AG04449 (cell line): ENCODE measurements at regions of chr16 and their contacts with region 1.

Region 1: DNA sequence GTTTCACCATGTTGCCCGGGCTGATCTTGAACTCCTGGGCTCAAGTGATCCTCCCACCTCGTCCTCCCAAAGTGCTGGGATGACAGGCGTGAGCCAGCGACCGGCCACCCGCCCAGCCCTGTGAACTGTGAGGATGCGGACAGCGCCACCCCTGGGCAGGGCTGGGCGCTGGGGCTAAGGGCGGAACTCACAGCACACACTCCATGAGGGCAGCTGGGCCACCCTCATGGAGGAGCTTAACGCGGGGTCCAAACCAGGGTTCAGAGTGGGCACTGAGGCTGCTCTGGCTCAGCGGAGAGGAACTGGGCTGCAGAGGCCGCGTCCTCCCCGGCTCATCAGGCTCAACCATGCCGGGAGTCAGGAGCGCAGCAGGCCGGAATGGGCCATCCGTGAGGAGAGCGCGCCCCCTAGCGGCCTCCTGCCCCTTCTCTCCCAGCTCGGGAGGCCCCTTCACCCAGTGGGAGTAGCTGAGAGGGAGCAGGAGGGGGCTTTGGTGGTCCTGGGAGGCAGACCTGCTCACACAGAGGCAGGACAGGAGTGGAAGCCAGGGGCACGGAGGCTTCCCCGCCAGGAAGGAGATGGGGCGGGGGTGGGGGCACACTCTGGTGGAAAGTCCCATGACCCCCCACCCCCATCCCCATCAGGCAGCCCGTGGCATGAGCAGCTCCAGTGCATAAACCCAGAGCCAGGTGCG is 13.8 kb downstream of the CORO7 start:
- DNase-seq: no peak
- H3K4me3 ChIP-seq: peak overlapping the region; percentile 15
- CTCF ChIP-seq: peak; percentile 90

Region 2: DNA sequence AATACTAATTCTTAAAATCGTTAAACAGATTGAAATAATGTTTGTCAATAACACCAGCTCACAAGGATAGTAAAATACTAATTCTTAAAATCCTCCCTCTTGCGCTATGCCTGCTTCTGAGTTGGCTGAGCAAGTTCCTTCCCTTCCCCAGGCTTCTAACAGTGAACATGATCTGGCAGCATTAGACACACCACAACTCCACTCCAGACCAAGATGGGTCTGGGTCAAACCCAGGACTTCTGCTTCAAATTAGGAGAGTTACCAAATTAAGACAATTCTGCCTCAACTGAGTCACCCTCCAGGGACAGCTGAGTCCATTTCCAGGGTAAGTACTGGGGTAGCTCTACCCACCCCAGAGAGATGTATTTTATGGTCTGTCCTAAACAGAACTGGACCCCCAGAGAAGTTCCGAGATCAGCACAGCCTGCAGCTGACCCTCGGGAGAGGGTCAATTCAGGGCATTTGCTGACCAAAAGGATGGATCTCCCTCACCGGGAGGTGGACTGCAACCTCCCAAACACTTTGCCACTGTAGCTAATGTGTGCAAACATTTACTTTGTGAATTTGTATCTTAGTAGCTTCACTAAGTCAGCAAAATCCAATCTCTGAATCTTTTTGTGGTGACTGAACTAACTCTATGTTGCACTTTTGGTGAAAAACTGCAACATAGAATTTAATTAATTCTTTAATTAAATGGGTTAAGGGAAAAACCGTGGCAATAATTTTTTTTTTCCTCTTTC is 335.2 kb before region 1 on chr16:
- CTCF ChIA-PET with region 1: no interaction called
- POLR2A ChIA-PET with region 1: no interaction called
- DNase-seq: no peak
- H3K4me3 ChIP-seq: no peak overlapping the region
- CTCF ChIP-seq: no peak

Region 3: DNA sequence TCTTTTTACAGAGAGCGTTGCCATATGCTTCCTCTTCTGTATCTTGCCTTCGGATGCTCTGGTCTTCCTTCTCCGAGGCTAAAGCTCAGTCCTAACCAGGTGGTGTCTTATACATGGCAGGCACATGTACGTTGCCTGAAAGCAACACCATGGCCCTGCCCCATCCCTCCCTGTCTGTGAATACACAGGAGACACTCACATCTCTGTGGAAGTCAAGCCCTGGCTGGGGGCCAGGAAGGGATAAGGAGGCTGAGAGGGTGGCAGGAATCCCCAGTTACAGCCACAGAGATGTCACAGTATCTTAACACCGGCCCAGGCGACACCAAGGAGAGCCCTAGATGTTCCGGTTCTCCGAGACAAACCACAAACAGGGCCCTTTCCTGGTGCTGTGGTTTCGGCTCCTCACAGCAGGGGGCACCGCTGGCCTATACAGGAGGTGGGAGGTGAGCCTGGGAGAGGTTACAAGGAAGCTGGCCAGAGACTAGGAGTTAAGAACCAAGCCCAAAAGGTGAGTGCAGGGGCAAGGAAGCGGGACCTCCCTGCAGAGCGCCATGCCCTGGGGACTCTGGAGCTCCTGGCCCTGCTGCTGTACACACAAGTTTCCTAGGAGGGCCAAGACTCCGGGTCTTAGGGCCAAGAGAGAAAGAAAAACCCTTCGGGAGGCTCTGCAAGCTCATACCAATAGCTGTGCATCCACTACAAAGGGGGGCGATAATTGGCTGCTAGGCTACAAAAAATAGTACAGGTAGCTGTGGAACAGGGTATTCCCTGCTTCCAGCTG is 202.4 kb before region 1 on chr16:
- CTCF ChIA-PET with region 1: interaction called, 10 read pairs
- POLR2A ChIA-PET with region 1: no interaction called
- DNase-seq: no peak
- H3K4me3 ChIP-seq: no peak overlapping the region
- CTCF ChIP-seq: peak; percentile 80

Region 4: GRCh38 chr16:4232541-4233386 is 169.8 kb before region 1 on chr16:
- CTCF ChIA-PET with region 1: no interaction called
- POLR2A ChIA-PET with region 1: no interaction called
- DNase-seq: no peak
- H3K4me3 ChIP-seq: no peak overlapping the region
- CTCF ChIP-seq: no peak

Region 5: DNA sequence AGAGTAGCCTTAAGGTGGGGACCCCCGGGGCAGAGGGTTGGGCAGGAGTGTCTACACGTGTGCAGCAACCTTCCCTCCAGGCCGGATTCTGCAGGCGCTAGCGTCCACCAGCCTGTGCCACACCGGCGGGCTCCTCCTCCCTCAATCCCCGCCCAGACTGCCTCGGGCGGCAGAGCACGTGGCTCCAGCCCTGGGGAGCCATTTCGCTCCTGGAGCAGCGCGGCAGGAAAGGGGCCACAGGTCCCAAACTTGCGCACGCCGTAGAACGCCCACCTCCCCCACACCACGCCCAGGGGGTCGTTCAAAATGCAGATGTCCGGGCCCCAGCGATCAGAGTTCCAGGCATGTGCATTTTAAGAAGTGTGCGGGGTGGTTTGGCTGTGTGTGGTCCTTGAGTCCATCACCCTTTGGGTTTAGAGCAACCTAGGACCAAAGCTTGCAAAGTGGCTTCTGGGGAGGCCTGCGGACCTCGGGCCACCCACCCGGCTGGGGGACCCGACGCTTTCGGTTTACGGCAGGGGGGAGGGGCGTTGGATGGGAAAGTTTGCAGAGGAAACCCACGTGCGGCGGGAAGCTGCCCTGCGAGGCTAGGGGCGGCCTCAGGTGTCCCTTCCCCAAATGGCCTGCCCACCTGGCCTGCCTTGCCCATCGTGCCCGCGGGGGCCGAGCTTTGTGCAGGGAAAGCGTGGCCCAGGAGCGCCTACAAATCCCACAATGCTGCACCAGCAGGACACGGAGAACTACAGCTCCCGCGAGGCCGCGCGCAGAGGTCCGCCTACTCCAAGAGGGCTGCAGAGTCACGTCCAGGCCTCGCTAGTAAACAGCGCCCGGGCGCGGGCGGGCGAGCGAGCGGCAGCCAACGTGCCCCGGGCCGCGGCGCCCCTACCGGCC is 131.2 kb before region 1 on chr16:
- CTCF ChIA-PET with region 1: interaction called, 14 read pairs
- POLR2A ChIA-PET with region 1: no interaction called
- DNase-seq: no peak
- H3K4me3 ChIP-seq: peak overlapping the region; percentile 93
- CTCF ChIP-seq: no peak

Region 6: DNA sequence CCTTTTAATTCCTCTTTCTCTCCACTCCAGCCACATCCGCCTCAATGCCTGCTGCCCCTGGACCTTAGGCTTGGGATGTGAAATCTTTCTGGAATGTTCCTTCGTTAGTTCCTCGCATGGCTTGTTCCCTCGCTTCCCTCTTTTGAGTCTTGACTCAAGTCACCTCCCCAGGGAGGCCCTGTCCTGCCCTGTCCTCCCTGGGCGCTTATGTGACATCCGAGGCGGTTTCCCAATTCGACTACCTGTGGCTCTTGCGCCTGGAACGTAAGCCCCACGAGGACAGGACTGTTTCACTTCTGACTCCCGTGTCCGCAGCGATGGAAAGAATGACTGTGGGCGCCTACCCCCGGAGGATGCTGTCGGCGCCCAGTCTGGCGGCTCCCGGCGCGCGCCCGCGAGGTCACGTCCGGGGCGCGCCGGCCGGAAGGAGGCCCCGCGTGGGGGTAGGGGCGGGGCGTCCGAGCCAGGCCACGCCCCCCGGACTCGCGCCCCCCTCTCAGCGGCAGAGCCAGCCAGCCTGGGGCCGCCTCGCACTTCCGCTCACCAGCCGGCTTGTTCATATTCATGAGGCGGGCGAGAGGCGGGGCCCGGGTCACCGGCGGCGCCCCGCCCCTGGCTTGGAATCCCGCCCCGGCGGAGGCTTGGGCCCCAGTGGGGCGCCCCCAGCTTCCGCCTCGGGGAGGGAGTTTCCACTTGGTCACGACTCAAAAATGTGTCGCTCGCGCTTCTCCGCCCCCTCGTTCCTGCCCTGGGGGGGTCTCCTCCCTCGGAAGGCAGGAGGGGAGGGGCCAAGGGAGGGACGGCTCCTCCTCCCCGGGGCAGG is 95.2 kb before region 1 on chr16:
- CTCF ChIA-PET with region 1: interaction called, 58 read pairs
- POLR2A ChIA-PET with region 1: interaction called, 3 read pairs
- DNase-seq: peak; percentile 67
- H3K4me3 ChIP-seq: peak overlapping the region; percentile 70
- CTCF ChIP-seq: no peak

Region 7: GRCh38 chr16:4350787-4351659 is 51.6 kb before region 1 on chr16 and contains the start of gene PAM16:
- CTCF ChIA-PET with region 1: interaction called, 213 read pairs
- POLR2A ChIA-PET with region 1: interaction called, 3 read pairs
- DNase-seq: peak; percentile 47
- H3K4me3 ChIP-seq: peak within 1 kb of the TSS; percentile 86
- CTCF ChIP-seq: no peak

Region 8: DNA sequence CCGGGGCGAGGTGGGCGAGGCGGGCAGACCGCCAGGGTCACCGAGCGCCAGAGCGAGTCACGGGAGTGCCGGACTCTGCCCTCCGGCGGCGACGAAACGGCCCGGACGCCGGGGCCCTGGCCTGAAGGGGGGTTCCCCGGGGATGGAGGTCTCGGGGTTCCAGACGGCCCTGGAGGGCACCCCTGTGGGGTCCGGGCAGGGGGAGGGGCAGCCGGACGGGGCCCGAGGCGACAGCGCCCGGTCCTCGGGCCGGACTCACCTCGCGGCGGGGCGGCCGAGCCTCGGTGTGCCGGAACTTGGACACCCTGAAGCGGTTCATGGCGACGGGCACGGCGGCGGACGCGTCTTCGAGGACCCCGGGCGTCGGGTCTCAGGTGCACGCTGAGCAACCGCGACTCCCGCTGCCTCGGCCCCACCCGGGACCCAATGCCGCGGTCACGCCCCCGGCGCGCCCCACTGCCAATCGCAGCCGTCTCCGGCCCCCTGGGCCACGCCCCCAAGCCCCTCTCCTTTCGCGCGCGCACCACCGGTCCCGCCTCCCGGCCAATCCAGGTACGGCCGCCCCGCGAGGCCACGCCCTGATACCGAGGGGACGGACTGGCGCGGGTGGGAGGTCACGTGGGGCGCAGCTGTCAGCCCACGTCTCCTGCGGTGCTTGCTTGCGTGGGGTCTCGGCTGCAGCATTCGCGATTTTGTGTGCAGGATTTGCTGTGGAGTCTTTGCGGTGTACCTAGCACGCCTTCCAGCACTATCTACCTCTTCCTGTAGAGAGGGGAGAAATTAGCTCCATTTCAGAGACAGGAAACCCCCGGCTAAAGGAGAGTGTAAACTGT is 13.8 kb after region 1 on chr16 and contains the start of gene CORO7:
- CTCF ChIA-PET with region 1: interaction called, 218 read pairs
- POLR2A ChIA-PET with region 1: no interaction called
- DNase-seq: no peak
- H3K4me3 ChIP-seq: peak within 1 kb of the TSS; percentile 78
- CTCF ChIP-seq: no peak